BJ (cell line): ENCODE measurements at regions of chr15 and their contacts with region 1.

Region 1: GRCh38 chr15:45457641-45458433 is 64.7 kb downstream of the SLC30A4 start:
- DNase-seq: no peak
- H3K4me3 ChIP-seq: peak overlapping the region; percentile 34
- H3K27me3 ChIP-seq: no peaks in the 10 kb centered on the region
- CTCF ChIP-seq: peak; percentile 66

Region 2: GRCh38 chr15:45425135-45425534 is 32.7 kb before region 1 on chr15:
- CTCF ChIA-PET with region 1: interaction called, 161 read pairs
- POLR2A ChIA-PET with region 1: no interaction called
- DNase-seq: no peak
- H3K4me3 ChIP-seq: no peak overlapping the region
- H3K27me3 ChIP-seq: no peaks in the 10 kb centered on the region
- CTCF ChIP-seq: no peak

Region 3: DNA sequence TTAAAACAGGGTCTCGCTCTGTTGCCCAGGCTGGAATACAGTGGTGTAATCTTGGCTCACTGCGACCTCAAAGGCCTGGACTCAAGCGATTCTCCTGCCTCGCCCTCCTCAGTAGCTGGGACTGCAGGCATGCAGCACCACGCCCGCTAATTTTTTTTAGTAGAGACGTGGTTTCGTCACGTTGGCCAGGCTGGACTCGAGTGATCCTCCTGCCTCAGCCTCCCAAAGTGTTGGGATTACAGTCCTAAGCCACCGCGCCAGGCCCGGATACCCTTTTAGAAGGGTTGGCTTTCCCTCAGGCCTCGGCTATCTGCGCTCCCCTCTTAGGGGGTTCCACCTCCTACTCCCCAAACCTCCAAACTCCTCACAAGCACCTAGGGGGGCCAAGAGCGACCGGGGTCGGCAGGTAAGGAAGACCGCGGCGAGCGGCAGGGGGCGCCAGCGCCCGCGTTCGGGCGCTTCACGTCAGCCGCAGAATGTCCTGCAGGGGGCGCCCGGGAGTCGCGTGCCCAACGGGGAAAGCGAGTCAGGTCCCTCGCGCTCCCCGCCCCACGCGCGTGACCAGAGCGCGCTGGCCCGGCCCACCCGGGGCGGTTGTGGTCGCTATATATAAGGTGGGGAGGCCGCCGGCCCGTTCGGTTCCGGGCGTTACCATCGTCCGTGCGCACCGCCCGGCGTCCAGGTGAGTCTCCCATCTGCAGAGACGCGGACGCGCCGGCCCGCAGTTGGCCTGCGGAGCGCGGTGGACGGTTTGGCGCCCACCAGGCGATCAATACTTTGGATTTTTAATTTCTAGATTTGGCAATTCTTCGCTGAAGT is 27.7 kb before region 1 on chr15:
- CTCF ChIA-PET with region 1: interaction called, 161 read pairs
- POLR2A ChIA-PET with region 1: no interaction called
- DNase-seq: no peak
- H3K4me3 ChIP-seq: peak overlapping the region; percentile 36
- H3K27me3 ChIP-seq: no peaks in the 10 kb centered on the region
- CTCF ChIP-seq: peak; percentile 99

Region 4: DNA sequence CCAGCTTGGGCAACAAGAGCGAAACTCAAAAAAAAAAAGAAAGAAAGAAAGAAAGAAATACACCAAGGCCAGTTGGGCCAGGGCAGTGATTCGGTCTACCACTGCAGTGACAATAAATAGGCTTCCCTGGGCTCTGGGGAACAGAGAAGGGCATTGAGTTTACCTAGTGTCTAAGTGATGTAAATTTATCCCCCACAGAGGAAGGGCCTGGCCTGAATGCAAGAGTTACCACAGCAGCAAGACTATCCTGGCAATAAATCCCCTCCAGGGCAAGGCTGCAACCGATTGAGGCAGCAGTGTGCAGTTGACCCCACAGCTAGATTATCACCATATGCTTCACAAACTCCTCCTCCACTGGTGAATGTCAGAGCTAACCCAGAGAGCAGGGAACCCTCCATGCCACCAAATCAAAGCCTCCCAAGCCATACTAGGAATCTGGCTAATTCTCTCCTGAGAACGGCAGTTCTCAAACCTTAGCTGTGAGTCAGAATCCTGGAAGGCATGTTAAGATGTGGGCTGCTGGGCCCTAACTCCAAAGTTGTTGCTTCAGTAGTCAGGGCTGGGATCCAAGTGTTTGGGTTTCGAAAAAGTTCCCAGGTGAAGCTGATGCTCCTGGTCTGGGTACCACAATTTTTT is 15.2 kb before region 1 on chr15:
- CTCF ChIA-PET with region 1: interaction called, 48 read pairs
- POLR2A ChIA-PET with region 1: no interaction called
- DNase-seq: no peak
- H3K4me3 ChIP-seq: no peak overlapping the region
- H3K27me3 ChIP-seq: no peaks in the 10 kb centered on the region
- CTCF ChIP-seq: 0 out of 2 replicates have a peak, but pooled peaks have one; percentile 2

Region 5: GRCh38 chr15:45476410-45476809 is 18.6 kb after region 1 on chr15:
- CTCF ChIA-PET with region 1: interaction called, 10 read pairs
- POLR2A ChIA-PET with region 1: no interaction called
- DNase-seq: no peak
- H3K4me3 ChIP-seq: no peak overlapping the region
- H3K27me3 ChIP-seq: no peaks in the 10 kb centered on the region
- CTCF ChIP-seq: no peak

Region 6: DNA sequence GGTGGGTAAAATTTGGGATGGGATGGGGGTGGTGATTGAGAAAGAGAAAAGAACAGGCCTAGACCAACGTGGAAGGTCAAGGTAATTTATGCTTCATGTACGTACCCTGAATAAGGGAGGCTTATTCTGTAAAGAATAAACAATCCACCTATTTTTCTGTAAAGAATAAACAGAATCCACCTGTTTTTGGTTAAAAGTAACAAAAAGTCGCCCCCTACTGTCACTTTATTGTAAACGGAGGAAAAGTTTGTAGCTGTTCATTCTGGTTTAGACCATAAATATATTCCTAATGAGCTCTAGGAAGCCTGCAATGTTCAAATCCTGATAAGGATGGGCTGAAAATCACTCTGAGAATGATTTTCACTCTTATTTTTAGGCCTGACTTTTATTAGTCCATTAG is 153.5 kb after region 1 on chr15:
- CTCF ChIA-PET with region 1: interaction called, 122 read pairs
- POLR2A ChIA-PET with region 1: no interaction called
- DNase-seq: no peak
- H3K4me3 ChIP-seq: no peak overlapping the region
- H3K27me3 ChIP-seq: no peaks in the 10 kb centered on the region
- CTCF ChIP-seq: peak; percentile 57

Region 7: DNA sequence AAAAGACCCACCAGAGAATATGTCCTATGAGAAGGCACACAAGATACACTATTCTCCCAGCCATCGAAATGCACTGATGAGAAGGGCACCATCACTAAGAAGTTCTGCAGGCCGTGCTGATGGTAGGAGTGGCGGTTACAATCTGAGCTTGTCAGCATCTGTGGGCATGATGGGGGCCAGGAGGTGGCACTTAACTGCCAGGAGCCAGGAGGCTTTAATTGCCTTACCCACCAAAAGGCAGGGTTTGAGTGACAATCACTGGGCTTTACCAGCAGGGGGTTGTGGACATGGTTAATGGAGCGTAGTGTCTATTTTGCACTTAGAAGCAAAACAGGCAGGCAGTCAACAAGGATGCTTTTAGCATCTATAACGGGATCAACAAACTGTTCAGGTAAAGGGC is 161.0 kb after region 1 on chr15:
- CTCF ChIA-PET with region 1: interaction called, 122 read pairs
- POLR2A ChIA-PET with region 1: no interaction called
- DNase-seq: no peak
- H3K4me3 ChIP-seq: no peak overlapping the region
- H3K27me3 ChIP-seq: no peaks in the 10 kb centered on the region
- CTCF ChIP-seq: no peak